ENCODE measurements at regions of chr7 and their contacts with region 1.

Region 1: DNA sequence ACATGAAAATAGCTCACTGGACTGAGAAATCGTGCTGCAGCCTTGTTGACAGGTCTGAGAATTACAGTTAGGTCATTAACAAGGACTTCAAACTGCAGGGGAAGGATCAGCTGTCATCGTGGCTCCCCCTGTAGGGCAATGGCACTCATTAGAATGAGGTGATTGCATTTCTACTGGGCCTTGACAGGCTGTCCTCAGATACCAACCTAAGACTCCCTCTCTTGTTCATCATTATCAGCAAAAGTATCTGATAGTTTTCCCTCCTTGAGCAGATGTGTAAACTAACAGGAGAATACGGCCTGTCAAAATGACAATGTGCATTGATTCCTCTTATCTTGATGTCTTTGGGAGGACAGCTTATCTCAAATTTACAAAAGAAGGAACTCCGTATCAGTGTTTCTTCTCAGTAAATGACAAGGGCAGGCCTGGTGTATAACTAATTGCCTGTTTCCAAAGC is 648.5 kb upstream of the LRRN3 start:
- DNase-seq: peak; percentile 40
- H3K4me3 ChIP-seq: no peak overlapping the region
- H3K27ac ChIP-seq: no peak overlapping the region
- H3K4me1 ChIP-seq: no peaks in the 10 kb centered on the region
- H3K27me3 ChIP-seq: no peaks in the 10 kb centered on the region
- CTCF ChIP-seq: peak; percentile 82 to 85

Region 2: DNA sequence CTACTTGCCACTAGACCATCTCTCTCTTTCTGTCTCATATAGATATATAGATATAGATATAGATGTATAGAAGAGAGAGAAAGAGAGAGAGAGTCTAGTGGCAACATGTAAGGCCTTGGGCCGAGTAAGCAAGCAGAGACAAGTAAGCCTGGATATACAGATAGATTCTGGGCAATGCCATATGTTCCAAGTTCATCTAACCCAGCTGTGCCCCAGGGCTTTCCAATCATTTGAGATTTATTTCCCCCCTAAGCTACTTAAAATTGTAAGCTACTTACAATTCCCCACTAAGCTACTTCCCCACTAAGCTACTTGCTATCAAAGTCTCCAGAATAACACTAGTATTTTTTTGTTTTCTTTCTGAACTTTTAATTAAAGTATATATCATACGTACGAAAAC is 778.6 kb before region 1 on chr7:
- CTCF ChIA-PET with region 1: no interaction called
- dilution Hi-C with region 1: no loop called
- in situ Hi-C with region 1: no loop called
- intact Hi-C with region 1: no loop called
- DNase-seq: no peak
- H3K4me3 ChIP-seq: no peak overlapping the region
- H3K27ac ChIP-seq: no peak overlapping the region
- H3K4me1 ChIP-seq: no peaks in the 10 kb centered on the region
- H3K27me3 ChIP-seq: no peaks in the 10 kb centered on the region
- CTCF ChIP-seq: no peak

Region 3: DNA sequence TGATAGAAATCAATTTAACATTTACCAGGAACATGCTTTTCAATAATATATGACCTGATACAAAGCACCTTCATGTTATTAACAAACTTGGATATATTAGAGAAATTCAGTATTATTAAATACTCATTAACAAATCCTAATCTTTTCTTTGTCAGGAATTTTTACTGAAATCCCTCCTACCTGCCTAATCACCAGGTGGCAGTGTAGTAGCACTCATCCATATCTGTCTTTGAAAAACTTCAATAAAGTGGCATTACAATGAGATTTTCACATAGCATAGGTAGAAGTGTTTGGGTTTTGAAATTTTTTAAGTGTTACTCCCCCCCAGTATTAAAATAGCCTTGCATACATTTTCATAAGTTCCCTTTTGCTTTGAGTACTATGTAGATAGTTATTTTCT is 598.0 kb before region 1 on chr7:
- CTCF ChIA-PET with region 1: no interaction called
- dilution Hi-C with region 1: no loop called
- in situ Hi-C with region 1: loop called in 1 of 2 experiments (anchors 25 kb)
- intact Hi-C with region 1: loop called (anchors 5 kb)
- DNase-seq: no peak
- H3K4me3 ChIP-seq: no peak overlapping the region
- H3K27ac ChIP-seq: no peak overlapping the region
- H3K4me1 ChIP-seq: no peaks in the 10 kb centered on the region
- H3K27me3 ChIP-seq: no peaks in the 10 kb centered on the region
- CTCF ChIP-seq: peak; percentile 50 to 68

Region 4: GRCh38 chr7:110003827-110004226 is 438.6 kb before region 1 on chr7:
- CTCF ChIA-PET with region 1: no interaction called
- dilution Hi-C with region 1: no loop called
- in situ Hi-C with region 1: no loop called
- intact Hi-C with region 1: loop called (anchors 10 kb)
- DNase-seq: no peak
- H3K4me3 ChIP-seq: no peak overlapping the region
- H3K27ac ChIP-seq: no peak overlapping the region
- H3K4me1 ChIP-seq: peaks cover 10% of the 10 kb centered on the region
- H3K27me3 ChIP-seq: no peaks in the 10 kb centered on the region
- CTCF ChIP-seq: peak in 1 of 2 donors; percentile 44

Region 5: DNA sequence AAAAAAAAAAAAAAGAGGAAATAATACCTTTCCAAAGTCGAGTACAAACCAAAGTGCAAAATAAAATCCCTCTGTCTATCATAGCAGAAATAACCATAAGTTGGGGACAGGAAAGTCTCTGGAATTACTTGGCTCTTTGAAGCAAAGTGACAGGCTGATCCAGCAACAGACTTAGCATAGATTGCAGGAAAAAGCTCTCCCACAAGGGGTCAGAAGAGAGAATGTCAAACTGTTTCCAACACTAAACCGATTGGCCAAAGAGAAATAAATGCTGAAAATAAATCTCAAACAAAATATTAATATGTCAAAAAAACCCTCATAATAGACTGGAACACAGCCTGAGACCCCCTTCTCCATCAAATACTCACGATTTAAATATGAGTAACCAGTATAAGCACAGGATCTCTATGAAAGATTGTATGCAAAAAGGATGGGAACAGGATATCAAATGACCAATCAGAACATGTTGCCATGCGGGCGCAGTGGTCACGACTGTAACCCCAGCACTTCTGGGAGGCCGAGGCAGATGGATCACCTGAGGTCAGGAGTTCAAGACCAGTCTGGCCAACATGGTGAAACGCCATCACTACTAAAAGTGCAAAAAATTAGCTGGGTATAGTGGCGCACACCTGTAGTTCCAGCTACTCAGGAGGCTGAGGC is 352.2 kb before region 1 on chr7:
- CTCF ChIA-PET with region 1: no interaction called
- dilution Hi-C with region 1: no loop called
- in situ Hi-C with region 1: loop called (anchors 25 kb)
- intact Hi-C with region 1: loop called (anchors 1 kb)
- DNase-seq: peak; percentile 32
- H3K4me3 ChIP-seq: no peak overlapping the region
- H3K27ac ChIP-seq: no peak overlapping the region
- H3K4me1 ChIP-seq: no peaks in the 10 kb centered on the region
- H3K27me3 ChIP-seq: no peaks in the 10 kb centered on the region
- CTCF ChIP-seq: peak; percentile 55 to 72